ENCODE measurements at regions of chr22 and their contacts with region 1.

Region 1: DNA sequence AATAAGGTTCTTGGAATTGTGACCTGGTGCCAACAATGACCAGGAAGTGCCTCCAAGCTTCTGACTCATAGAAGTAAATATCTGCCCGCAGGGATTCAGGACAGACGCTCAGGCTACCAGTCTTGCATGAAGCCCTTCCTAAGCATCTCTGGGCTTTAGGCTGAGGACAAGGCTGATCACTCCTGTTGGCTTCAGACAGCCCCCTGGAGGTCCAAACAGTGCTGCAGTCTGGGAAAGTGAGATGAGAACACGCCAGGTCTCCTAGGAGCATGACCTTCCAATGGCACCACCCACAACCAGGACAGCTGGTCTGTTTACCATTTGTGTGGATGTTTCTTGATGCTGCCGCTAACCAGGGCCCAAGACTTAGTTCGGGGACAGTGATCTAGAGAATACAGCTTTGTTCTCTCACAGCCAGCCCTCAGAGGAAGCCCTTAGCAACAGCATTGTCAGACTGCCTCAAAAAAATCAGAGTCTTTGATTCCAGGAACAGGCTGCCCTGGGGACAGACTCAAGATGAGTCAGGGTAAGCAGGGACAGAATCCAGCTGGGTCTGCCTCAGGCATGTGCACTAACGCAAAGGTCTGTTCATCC is 111.2 kb downstream of the ZNF280B start:
- DNase-seq: peak; percentile 37 to 61
- ATAC-seq: peak; percentile 80 to 95
- H3K4me3 ChIP-seq: no peak overlapping the region
- H3K27ac ChIP-seq: peak overlapping the region; percentile 49 to 51; a peak in 5 of 6 replicates
- H3K4me1 ChIP-seq: peaks cover 12% of the 10 kb centered on the region
- CTCF ChIP-seq: 0 out of 3 replicates have a peak, but pooled peaks have one; percentile 9
- EP300 ChIP-seq: no peak
- POLR2A ChIP-seq: no peak
- RAD21 ChIP-seq: no peak

Region 2: DNA sequence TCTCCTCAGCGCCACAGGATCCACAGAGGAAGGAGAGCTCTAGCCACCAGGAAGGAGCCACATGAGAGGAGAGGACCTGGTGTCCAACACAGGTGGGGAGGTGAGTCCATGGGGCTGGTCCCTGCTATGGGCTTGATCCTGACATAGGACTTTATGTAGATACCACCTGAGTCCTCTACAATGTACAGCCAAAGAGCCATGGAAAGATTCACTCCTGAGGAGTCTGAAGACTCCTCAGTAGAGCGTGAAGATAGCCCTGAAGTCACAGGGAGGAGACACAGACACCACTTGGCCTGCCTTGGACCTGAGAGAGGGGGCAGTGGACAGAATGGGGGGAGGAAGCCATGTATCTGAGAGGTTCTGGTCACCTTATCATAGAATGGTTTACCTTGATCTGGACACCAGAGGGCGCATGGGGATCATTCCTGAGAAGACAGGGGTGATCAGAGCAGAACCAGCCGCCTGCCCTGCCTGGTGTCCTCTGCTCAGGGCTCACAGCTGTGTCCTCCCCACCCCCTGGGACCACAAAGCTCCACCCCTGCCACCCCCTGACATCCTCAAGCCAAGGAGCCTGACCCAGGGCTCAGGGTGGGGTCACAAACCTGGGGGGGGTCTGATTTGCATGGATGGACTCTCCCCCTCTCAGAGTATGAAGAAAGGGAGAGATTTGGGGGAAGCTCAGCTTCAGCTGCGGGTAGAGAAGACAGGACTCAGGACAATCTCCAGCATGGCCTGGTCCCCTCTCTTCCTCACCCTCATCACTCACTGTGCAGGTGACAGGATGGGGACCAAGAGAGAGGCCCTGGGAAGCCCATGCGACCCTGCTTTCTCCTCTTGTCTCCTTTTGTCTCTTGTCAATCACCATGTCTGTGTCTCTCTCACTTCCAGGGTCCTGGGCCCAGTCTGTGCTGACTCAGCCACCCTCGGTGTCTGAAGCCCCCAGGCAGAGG is 34.2 kb after region 1 on chr22:
- CTCF ChIA-PET with region 1: interaction called, 11 read pairs
- POLR2A ChIA-PET with region 1: no interaction called
- DNase-seq: peak; percentile 48 to 53
- ATAC-seq: peak; percentile 97 to 99
- H3K4me3 ChIP-seq: no peak overlapping the region
- H3K27ac ChIP-seq: no peak overlapping the region
- H3K4me1 ChIP-seq: no peaks in the 10 kb centered on the region
- CTCF ChIP-seq: peak; percentile 55
- EP300 ChIP-seq: no peak
- POLR2A ChIP-seq: no peak
- RAD21 ChIP-seq: peak; percentile 45 to 50

Region 3: GRCh38 chr22:22454997-22455396 is 57.6 kb after region 1 on chr22:
- CTCF ChIA-PET with region 1: no interaction called
- POLR2A ChIA-PET with region 1: no interaction called
- DNase-seq: no peak
- ATAC-seq: no peak
- H3K4me3 ChIP-seq: no peak overlapping the region
- H3K27ac ChIP-seq: no peak overlapping the region
- H3K4me1 ChIP-seq: no peaks in the 10 kb centered on the region
- CTCF ChIP-seq: no peak
- EP300 ChIP-seq: no peak
- POLR2A ChIP-seq: no peak
- RAD21 ChIP-seq: no peak

Measured in A549 (cell line).